Transverse colon (tissue), 4 donors: ENCODE measurements at regions of chr1 and their contacts with region 1.

Region 1: DNA sequence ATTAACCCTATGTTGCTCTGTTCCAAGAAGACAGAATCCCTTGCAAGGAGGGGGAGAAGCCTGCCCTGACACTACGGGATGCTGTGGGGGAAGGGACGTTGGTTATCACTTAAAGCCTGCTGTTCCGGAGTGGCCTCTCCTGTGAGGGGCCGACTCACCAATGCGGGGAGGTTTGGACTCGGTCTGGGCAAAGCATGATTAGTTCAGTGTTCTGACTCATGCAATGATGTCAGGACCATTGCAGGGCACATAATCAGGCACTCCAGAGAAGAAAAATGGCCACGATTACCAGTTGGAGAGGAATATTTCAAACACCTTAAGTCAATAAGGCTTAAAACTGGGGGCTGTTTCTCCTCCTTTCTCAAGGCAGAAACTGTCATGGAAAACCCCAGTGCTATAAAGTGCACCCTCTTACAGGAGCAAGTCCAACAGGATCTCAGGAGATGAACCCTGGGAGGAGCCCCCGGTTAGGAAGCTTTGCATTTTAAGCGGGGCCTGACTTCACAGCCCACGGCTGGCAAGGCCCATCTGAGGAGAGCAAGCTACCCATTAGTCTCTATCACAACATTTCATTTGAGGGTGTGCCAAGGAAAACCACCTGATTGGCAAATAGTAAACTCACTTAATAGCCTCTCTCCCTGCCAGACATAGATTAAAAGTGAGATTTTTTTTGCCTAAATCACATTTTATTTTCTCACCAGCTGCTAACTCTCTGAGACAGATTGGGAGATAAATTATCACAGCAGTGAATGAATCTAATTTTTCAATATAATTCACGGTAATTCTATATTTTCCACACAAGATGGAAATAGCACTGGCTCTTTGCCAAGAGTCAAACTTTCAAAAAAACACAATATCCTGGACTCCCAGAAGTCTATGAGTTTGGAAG is 202.5 kb downstream of the C1orf94 start:
- DNase-seq: no peak
- H3K4me3 ChIP-seq: no peak overlapping the region
- H3K27ac ChIP-seq: no peak overlapping the region
- H3K4me1 ChIP-seq: no peaks in the 10 kb centered on the region
- H3K27me3 ChIP-seq: peaks cover 27% of the 10 kb centered on the region
- CTCF ChIP-seq: no peak
- EP300 ChIP-seq: no peak
- POLR2A ChIP-seq: no peak

Region 2: GRCh38 chr1:33300673-33301072 is 1078.5 kb before region 1 on chr1:
- in situ Hi-C with region 1: no loop called
- intact Hi-C with region 1: loop called (anchors 10 kb)
- DNase-seq: peak; percentile 48
- H3K4me3 ChIP-seq: no peak overlapping the region
- H3K27ac ChIP-seq: peak overlapping the region in 3 of 4 donors; percentile 17 to 38 (median 26)
- H3K4me1 ChIP-seq: peaks cover 0 to 16% (median 4%) of the 10 kb centered on the region in 4 donors
- H3K27me3 ChIP-seq: peaks cover under 1% of the 10 kb centered on the region
- CTCF ChIP-seq: no peak
- EP300 ChIP-seq: no peak
- POLR2A ChIP-seq: no peak